ENCODE measurements at regions of chr1 and their contacts with region 1.

Region 1: DNA sequence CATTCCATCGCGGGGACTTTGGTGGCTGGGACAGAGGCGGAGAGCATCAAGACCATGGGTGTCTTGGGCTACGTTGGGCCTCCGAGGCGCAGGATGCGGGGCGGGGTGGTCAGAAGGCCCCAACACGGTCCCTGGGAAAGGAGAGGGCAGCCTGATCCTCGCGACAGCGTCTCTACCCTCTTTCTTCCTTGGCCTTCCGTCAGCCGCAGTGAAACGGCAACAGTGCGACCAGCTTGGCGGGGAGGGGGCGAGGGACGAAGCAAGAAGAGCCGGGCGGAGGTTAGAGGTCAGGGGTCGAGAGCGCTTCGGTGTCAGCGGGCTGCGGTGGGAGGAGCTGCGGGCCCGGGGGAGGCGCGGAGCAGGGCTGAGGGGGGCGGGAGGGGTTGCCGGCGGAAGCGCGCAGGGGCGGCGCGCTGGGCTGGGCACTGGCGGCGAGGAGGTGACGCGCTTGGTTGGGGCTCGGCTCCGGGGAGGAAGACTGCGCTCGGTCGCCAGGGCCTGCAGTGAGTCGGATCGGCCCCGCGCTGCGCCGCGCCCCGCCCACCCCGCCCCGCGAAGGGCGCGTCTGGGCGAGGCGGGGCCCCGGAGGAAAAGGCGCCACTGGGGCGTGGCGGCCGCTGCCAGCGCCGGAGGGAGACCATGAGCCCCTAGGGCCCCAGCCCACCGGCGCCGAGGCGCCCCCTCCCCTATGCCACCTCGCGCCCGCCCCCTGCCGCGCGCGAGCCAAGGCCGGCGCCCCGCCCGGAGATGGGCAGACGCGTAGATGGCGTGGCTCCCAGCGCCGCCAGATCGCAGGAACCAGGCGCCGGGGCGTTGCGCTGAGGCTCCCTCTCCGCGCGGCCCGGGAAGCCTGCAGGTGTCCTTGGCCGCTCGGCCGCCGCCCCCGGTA is at the start of gene KCNC4:
- DNase-seq: peak; percentile 72 to 85
- H3K4me3 ChIP-seq: peak within 1 kb of the TSS; percentile 41 to 78 (median 62)
- H3K27ac ChIP-seq: no peak within 1 kb of the TSS
- H3K4me1 ChIP-seq: peaks cover 7 to 23% (median 20%) of the 10 kb centered on the region in 4 experiments
- H3K27me3 ChIP-seq: peaks cover 5 to 22% (median 21%) of the 10 kb centered on the region in 4 experiments
- CTCF ChIP-seq: no peak
- EP300 ChIP-seq: peak in 1 of 2 experiments; percentile 85; a peak in 1 of 3 replicates
- POLR2A ChIP-seq: peak in 1 of 2 experiments; percentile 38; a peak in 1 of 3 replicates
- RAD21 ChIP-seq: no peak
- total RNA-seq, gene KCNC4: 11.2 TPM in 2 replicates

Region 2: DNA sequence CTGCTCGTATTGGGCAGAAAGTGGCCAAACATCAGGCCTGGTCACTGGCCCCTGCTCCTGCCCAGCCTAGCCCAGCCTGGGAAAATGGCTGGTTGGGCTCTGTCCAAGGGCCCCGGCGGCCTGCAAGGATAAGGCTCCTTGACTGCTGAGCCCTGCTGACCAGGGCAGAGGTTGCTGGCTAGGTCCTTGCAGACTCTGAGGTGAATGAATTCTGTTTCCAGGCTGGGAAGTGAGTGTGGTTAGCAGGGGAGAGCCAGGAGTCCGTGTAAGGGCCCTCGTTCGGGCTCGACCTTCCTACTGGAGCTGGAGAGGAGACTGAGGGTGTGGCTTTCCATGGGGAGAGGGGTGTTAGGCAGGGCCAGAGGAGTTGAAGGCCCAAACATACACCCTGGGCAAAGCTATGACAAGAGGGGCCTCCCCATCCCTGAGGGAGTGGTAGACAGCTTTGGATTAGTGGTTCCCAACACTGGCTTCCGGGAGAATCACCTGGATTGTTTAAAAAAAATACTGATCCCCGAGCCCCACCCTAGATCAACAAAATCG is 278.7 kb before region 1 on chr1:
- CTCF ChIA-PET with region 1: no interaction called
- POLR2A ChIA-PET with region 1: no interaction called
- DNase-seq: peak; percentile 60 to 89
- H3K4me3 ChIP-seq: no peak overlapping the region
- H3K27ac ChIP-seq: peak overlapping the region; percentile 59; the same call in 1 of the 2 replicates
- H3K4me1 ChIP-seq: peaks cover 4 to 9% (median 5%) of the 10 kb centered on the region in 4 experiments; a peak in 6 of 7 replicates
- H3K27me3 ChIP-seq: no peaks in the 10 kb centered on the region
- CTCF ChIP-seq: no peak
- EP300 ChIP-seq: peak; percentile 67 to 79; a peak in 2 of 3 replicates
- POLR2A ChIP-seq: peak in 1 of 2 experiments; percentile 49; a peak in 1 of 3 replicates
- RAD21 ChIP-seq: peak; percentile 30 to 47; a peak in 3 of 4 replicates

Region 3: GRCh38 chr1:109975718-109976117 is 234.2 kb before region 1 on chr1:
- CTCF ChIA-PET with region 1: no interaction called
- POLR2A ChIA-PET with region 1: no interaction called
- DNase-seq: no peak
- H3K4me3 ChIP-seq: no peak overlapping the region
- H3K27ac ChIP-seq: no peak overlapping the region
- H3K4me1 ChIP-seq: no peaks in the 10 kb centered on the region
- H3K27me3 ChIP-seq: no peaks in the 10 kb centered on the region
- CTCF ChIP-seq: no peak
- EP300 ChIP-seq: no peak
- POLR2A ChIP-seq: no peak
- RAD21 ChIP-seq: no peak

Region 4: GRCh38 chr1:110196917-110197765 is 12.8 kb before region 1 on chr1:
- CTCF ChIA-PET with region 1: interaction called, 35 read pairs
- POLR2A ChIA-PET with region 1: no interaction called
- DNase-seq: peak in 1 of 2 experiments; percentile 63
- H3K4me3 ChIP-seq: no peak overlapping the region
- H3K27ac ChIP-seq: no peak overlapping the region
- H3K4me1 ChIP-seq: peaks cover 0 to 6% (median 2%) of the 10 kb centered on the region in 4 experiments; a peak in 2 of 7 replicates
- H3K27me3 ChIP-seq: no peaks in the 10 kb centered on the region
- CTCF ChIP-seq: peak; percentile 73 to 95 (median 81)
- EP300 ChIP-seq: no peak
- POLR2A ChIP-seq: no peak
- RAD21 ChIP-seq: peak; percentile 70 to 82

Region 5: GRCh38 chr1:110229348-110230001 is 19.5 kb after region 1 on chr1:
- CTCF ChIA-PET with region 1: interaction called, 19 read pairs
- POLR2A ChIA-PET with region 1: interaction called, 7 read pairs
- DNase-seq: no peak
- H3K4me3 ChIP-seq: no peak overlapping the region
- H3K27ac ChIP-seq: no peak overlapping the region
- H3K4me1 ChIP-seq: peaks cover 0 to 6% (median 3%) of the 10 kb centered on the region in 4 experiments; a peak in 1 of 7 replicates
- H3K27me3 ChIP-seq: no peaks in the 10 kb centered on the region
- CTCF ChIP-seq: peak in 1 of 3 experiments; percentile 2; a peak in 1 of 4 replicates
- EP300 ChIP-seq: no peak
- POLR2A ChIP-seq: no peak
- RAD21 ChIP-seq: peak in 1 of 2 experiments; percentile 20; a peak in 1 of 4 replicates

Region 6: DNA sequence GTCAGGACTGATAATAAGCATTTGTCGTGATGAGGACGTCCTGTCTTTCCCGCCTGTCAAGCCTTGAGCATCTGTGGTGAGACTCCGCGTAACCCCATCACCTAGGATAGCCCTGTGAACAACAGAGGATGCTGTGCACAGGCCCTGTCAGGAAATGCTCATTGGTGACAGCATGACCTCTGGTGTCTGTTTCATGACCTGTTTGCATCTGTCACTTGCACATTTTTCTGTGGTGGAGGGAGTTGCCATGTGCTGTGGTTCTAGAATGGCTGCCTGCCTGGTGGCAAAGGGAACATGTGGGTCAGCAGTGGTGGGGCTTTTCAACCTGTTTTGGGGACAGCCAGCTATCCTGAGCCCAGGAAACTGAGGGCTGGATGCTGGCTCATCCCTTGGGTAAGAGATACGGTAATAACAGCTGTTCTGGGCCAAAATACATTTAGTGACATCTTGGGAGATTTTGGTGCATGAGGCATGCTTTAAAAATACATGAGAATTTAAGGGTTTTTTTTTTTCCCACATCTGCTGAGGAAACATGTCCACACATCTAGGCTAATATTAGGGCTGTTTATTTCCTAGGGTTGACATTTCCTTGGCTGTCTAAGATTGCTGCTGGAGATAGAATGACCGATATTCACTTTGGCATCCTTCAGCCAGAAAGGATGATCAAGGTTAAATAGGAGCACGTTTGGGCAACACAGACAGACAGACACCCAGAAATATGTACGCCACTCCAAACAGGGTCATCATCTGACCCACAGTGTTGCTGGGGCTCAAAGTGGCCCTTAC is 53.1 kb after region 1 on chr1:
- CTCF ChIA-PET with region 1: interaction called, 13 read pairs
- POLR2A ChIA-PET with region 1: no interaction called
- DNase-seq: no peak
- H3K4me3 ChIP-seq: no peak overlapping the region
- H3K27ac ChIP-seq: no peak overlapping the region
- H3K4me1 ChIP-seq: peaks cover 0 to 2% (median 0%) of the 10 kb centered on the region in 4 experiments; a peak in 1 of 7 replicates
- H3K27me3 ChIP-seq: no peaks in the 10 kb centered on the region; a peak in 1 of 7 replicates
- CTCF ChIP-seq: no peak
- EP300 ChIP-seq: no peak
- POLR2A ChIP-seq: no peak
- RAD21 ChIP-seq: no peak

Region 7: GRCh38 chr1:110338886-110339406 is 129.0 kb after region 1 on chr1 and contains the start of gene RBM15:
- CTCF ChIA-PET with region 1: interaction called, 146 read pairs
- POLR2A ChIA-PET with region 1: interaction called, 13 read pairs
- DNase-seq: peak; percentile 92 to 98
- H3K4me3 ChIP-seq: peak within 1 kb of the TSS; percentile 93 to 97 (median 96)
- H3K27ac ChIP-seq: peak within 1 kb of the TSS; percentile 97
- H3K4me1 ChIP-seq: peaks cover 0 to 18% (median 15%) of the 10 kb centered on the region in 4 experiments; a peak in 6 of 7 replicates
- H3K27me3 ChIP-seq: no peaks in the 10 kb centered on the region
- CTCF ChIP-seq: no peak
- EP300 ChIP-seq: no peak
- POLR2A ChIP-seq: no peak
- RAD21 ChIP-seq: no peak
- total RNA-seq, gene RBM15: 41.2 and 44.9 TPM in 2 replicates

Region 8: DNA sequence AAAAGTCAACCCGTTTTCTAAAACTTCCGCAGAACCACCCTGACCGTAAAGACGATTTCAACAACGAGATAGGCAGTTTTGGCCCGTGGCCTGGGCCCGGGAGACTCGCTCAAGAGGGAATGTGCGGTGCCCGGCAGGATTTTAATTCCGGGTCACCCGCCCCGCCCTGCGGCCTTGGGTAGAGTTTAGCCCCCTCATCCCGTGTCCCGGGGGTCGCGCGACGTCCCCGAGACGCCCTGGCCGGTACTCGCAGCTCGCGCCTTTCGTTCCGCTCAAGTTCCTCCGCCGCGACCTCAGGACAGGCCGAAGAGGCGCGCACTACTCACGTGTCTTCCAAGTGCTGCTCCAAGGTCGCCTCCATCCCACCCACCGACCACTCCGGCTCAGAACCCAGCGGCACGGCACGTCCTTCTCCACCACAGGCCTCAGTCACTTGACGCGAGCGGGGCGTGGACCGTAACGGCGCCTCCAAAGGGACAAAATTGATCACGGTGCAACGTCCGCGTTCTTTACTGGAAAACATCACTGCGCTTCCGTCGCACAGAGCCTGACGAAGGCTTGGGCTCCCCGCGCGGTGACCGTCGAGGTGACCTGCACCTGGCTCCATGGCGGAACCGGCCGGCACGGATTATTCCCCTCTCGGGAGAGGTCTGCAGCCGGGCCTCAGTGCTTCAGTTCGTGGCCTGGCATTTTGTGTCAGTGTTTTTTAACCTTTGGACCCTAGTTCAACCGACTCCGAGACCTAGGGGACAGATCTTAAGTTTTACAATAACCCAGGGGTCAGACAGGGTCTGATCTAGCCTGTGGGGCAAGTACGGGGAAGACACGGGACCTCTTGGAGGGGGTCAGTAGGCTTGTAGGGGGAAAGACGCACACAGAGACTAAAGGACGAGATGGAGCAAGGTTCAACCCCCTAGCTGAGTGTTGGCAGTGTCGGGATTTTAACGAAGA is 197.6 kb after region 1 on chr1 and contains the start of gene LAMTOR5:
- CTCF ChIA-PET with region 1: interaction called, 131 read pairs
- POLR2A ChIA-PET with region 1: no interaction called
- DNase-seq: peak; percentile 67 to 91
- H3K4me3 ChIP-seq: peak within 1 kb of the TSS; percentile 78 to 90 (median 83)
- H3K27ac ChIP-seq: peak within 1 kb of the TSS; percentile 76
- H3K4me1 ChIP-seq: no peaks in the 10 kb centered on the region; a peak in 2 of 7 replicates
- H3K27me3 ChIP-seq: 0 out of 7 replicates have a peak, but pooled peaks cover 0 to 3% (median 0%) of the 10 kb centered on the region in 4 experiments
- CTCF ChIP-seq: no peak
- EP300 ChIP-seq: no peak
- POLR2A ChIP-seq: peak; percentile 68 to 91
- RAD21 ChIP-seq: 0 out of 4 replicates have a peak, but pooled peaks of 1 of the 2 experiments have one; percentile 0
- total RNA-seq, gene LAMTOR5: 84.4 and 91.9 TPM in 2 replicates